ENCODE measurements at regions of chr2 and their contacts with region 1.

Region 1: GRCh38 chr2:119914266-119914665 is 98.6 kb upstream of the EPB41L5 start:
- DNase-seq: no peak
- ATAC-seq: no peak
- H3K4me3 ChIP-seq: no peak overlapping the region
- H3K27ac ChIP-seq: no peak overlapping the region
- H3K4me1 ChIP-seq: no peaks in the 10 kb centered on the region
- H3K27me3 ChIP-seq: no peaks in the 10 kb centered on the region
- CTCF ChIP-seq: no peak

Region 2: GRCh38 chr2:119759451-119760236 is 154.6 kb before region 1 on chr2 and contains the start of gene PTPN4:
- CTCF ChIA-PET with region 1: no interaction called
- POLR2A ChIA-PET with region 1: no interaction called
- in situ Hi-C with region 1: no loop called
- intact Hi-C with region 1: loop called (anchors 10 kb)
- DNase-seq: peak; percentile 76
- ATAC-seq: peak; percentile 97
- H3K4me3 ChIP-seq: peak within 1 kb of the TSS; percentile 72 to 92
- H3K27ac ChIP-seq: peak within 1 kb of the TSS; percentile 96
- H3K4me1 ChIP-seq: peaks cover 22% of the 10 kb centered on the region
- H3K27me3 ChIP-seq: no peaks in the 10 kb centered on the region
- CTCF ChIP-seq: no peak
- total RNA-seq, gene PTPN4: 45.9 TPM

Region 3: GRCh38 chr2:119826370-119826961 is 87.8 kb before region 1 on chr2:
- CTCF ChIA-PET with region 1: interaction called, 15 read pairs
- POLR2A ChIA-PET with region 1: no interaction called
- in situ Hi-C with region 1: no loop called
- intact Hi-C with region 1: no loop called
- DNase-seq: no peak
- ATAC-seq: peak; percentile 89
- H3K4me3 ChIP-seq: no peak overlapping the region
- H3K27ac ChIP-seq: no peak overlapping the region
- H3K4me1 ChIP-seq: peaks cover 3% of the 10 kb centered on the region; the same call in 1 of the 2 replicates
- H3K27me3 ChIP-seq: no peaks in the 10 kb centered on the region
- CTCF ChIP-seq: peak; percentile 79

Region 4: GRCh38 chr2:119879502-119879901 is 34.8 kb before region 1 on chr2:
- CTCF ChIA-PET with region 1: no interaction called
- POLR2A ChIA-PET with region 1: interaction called, 11 read pairs
- in situ Hi-C with region 1: no loop called
- intact Hi-C with region 1: no loop called
- DNase-seq: no peak
- ATAC-seq: no peak
- H3K4me3 ChIP-seq: no peak overlapping the region
- H3K27ac ChIP-seq: no peak overlapping the region
- H3K4me1 ChIP-seq: no peaks in the 10 kb centered on the region
- H3K27me3 ChIP-seq: no peaks in the 10 kb centered on the region
- CTCF ChIP-seq: no peak